Activated naive CD4-positive, alpha-beta T cell treated with anti-CD3 and anti-CD28 coated beads for 36 hours (primary cell): ENCODE measurements at regions of chr11 and their contacts with region 1.

Region 1: DNA sequence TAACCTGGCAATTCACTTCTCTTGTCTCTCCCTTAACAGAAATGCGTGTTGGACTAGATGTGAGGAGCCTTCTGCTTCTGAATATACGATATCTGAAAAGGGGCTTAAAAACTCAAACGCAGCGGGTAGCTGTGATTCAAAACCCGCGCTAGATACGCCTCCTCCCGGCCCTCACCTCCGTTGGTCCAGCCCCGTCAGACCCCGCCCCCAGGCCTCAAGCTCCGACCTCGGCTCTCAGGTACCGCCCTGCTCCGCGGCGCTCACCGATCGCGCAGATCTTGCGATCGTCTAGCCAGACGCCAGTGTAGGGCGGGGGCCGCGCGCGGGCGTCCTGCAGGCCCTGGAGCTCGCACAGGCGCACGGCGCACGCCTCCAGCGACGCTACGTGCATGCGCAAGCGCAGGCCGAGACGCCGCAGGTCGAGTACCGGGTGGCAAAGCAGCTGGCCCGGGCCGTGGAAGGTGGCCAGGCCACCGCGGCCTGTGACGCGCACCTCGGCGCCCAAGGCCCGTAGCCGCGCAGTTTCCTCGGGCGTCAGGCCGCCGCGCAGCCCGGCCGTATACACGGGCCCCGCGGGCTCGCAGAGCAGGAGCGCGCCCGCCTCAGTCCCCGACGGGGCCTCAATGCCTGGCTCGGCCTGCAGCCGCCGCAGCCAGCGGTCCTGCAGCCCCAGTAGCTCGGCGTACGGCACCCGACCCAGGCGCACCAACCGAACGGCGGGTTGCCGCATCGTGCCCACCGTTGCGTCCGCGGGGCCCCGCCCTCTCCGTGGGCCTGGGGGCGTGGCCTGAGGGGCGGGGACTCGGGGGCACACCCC is at the start of gene LIPT2:
- DNase-seq: peak; percentile 99
- H3K4me3 Mint-ChIP-seq: peak within 1 kb of the TSS; percentile 83
- H3K27ac Mint-ChIP-seq: peak within 1 kb of the TSS; percentile 95
- H3K4me1 Mint-ChIP-seq: peaks cover 17% of the 10 kb centered on the region
- H3K27me3 Mint-ChIP-seq: no peaks in the 10 kb centered on the region
- total RNA-seq, gene LIPT2: 3.1 to 5.6 TPM

Region 2: DNA sequence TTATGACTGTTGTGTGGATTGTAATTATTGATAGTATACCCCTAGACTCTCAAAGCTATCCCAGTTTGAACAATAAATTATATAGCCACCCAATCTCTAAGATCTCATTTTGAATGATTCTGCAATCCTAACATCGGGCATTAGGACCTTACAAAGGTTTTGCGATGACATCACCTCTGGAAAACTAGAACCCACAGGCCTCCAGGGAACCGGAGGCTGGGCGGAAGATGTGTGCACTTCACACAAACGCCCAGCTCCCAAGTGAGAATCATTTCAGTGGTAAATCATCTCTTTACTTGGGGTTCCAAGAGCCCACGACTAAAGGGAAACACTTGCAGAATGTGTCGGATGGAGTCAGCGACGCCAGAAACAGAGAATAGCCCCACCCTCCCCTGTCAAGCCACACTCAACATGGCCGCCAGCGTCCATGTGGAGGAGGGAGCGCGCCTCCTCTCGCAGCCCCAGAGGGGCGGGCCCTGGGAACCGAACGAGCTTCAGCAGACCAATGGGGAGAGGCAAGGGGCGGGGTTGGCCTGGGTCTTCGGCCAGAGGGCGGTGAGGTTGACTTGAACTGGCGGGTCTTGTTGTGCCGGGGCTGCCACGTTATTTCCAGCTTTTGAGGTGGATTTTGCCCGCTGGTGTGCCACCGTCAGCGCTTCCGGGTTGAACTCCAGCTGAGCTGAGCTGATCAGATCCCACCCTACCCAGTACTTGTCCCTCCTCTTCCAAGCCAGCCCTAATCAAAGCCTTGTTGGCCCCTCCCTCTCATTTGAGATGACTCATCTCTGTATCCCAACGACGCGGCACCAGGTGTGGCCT is 713.9 kb before region 1 on chr11:
- CTCF ChIA-PET with region 1: no interaction called
- intact Hi-C with region 1: loop called (anchors 5 kb)
- DNase-seq: peak; percentile 99
- H3K4me3 Mint-ChIP-seq: peak overlapping the region; percentile 85
- H3K27ac Mint-ChIP-seq: peak overlapping the region; percentile 98
- H3K4me1 Mint-ChIP-seq: peaks cover 14% of the 10 kb centered on the region
- H3K27me3 Mint-ChIP-seq: no peaks in the 10 kb centered on the region

Region 3: GRCh38 chr11:73995247-73995646 is 497.9 kb before region 1 on chr11:
- CTCF ChIA-PET with region 1: no interaction called
- intact Hi-C with region 1: loop called (anchors 5 kb)
- DNase-seq: no peak
- H3K4me3 Mint-ChIP-seq: peak overlapping the region; percentile 44
- H3K27ac Mint-ChIP-seq: peak overlapping the region; percentile 85
- H3K4me1 Mint-ChIP-seq: peaks cover 68% of the 10 kb centered on the region
- H3K27me3 Mint-ChIP-seq: no peaks in the 10 kb centered on the region

Region 4: DNA sequence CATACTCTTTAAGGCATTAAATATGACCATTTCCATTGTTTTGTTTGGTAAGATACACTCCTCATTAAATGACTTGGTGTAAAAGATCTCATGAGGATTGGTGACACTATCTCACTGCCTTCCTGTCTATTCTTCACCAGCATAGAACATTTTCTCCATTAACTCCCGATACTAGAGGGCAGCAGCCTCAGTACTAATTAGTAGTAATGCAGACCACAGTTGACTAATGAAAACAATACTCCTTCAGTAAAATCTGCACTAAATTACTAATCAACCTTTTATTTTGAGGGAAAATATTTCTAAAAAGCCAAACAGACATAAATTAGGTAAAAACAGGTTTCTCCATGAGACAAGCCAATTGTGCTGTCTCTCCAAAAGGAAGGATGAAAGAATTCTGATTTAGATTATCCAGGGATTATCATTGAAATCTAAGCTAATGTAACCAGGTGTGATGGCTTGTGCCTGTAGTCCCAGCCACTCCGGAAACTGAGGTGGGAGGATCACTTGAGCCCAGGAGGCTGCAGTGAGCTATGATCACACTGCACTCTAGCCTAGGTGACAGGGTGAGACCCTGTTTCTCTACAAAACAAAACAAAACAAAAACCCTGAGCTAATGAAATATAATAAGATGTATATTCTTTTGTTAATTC is 104.4 kb before region 1 on chr11:
- CTCF ChIA-PET with region 1: no interaction called
- intact Hi-C with region 1: loop called (anchors 2 kb)
- DNase-seq: peak; percentile 90
- H3K4me3 Mint-ChIP-seq: no peak overlapping the region
- H3K27ac Mint-ChIP-seq: peak overlapping the region; percentile 72
- H3K4me1 Mint-ChIP-seq: peaks cover 33% of the 10 kb centered on the region
- H3K27me3 Mint-ChIP-seq: no peaks in the 10 kb centered on the region

Region 5: DNA sequence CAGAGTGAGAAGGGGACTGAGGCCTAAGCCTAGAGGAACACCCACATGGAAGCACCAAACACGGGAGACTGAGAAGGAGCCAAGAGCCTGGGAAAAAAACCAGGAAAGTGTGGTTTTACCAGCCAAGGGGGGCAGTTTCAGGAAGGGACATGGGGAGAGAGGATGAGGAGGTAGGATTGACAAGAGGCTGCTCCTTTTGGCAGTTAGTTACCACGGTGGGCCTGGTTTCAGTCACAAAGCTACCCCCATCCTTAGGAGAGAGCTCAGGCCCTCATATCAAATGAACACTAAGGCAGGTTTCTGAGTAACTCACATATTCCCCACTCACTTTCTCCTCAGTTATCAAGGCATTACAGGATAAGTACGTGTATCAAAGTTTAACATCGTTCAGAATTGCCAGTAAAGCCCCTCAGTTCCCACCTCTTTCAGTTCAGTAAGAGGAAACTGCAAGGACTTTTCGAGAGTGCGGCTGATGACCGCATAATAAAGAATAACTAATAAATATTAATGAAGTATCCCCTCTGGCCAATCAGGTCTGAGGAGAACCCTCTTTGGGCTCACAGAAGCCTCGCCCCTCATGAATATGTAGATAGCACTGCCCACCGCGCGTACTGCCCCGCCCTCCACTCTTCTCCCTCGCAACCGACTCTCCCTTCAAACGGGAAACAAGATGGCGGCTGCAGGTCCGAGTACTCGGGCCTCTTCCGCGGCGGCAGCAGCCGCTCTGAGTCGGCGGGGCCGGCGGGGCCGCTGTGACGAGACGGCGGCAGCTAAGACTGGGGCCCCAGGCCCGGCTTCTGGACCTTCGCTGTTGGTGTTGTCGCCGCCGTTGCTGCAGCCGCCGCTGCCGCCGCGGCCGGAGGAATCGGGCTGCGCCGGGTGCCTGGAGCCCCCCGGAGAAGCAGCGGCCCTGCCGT is 255.3 kb after region 1 on chr11 and contains the start of gene RNF169:
- CTCF ChIA-PET with region 1: no interaction called
- intact Hi-C with region 1: loop called (anchors 1 kb)
- DNase-seq: peak; percentile 94
- H3K4me3 Mint-ChIP-seq: peak within 1 kb of the TSS; percentile 83
- H3K27ac Mint-ChIP-seq: peak within 1 kb of the TSS; percentile 71
- H3K4me1 Mint-ChIP-seq: peaks cover 42% of the 10 kb centered on the region
- H3K27me3 Mint-ChIP-seq: no peaks in the 10 kb centered on the region
- total RNA-seq, gene RNF169: 15.8 to 16.0 TPM

Region 6: GRCh38 chr11:75351791-75352587 is 858.8 kb after region 1 on chr11:
- CTCF ChIA-PET with region 1: no interaction called
- intact Hi-C with region 1: loop called (anchors 10 kb)
- DNase-seq: peak; percentile 54
- H3K4me3 Mint-ChIP-seq: peak overlapping the region; percentile 84
- H3K27ac Mint-ChIP-seq: peak overlapping the region; percentile 75
- H3K4me1 Mint-ChIP-seq: peaks cover 55% of the 10 kb centered on the region
- H3K27me3 Mint-ChIP-seq: no peaks in the 10 kb centered on the region